CD8-positive, alpha-beta memory T cell (primary cell): ENCODE measurements at regions of chr1 and their contacts with region 1.

Region 1: GRCh38 chr1:67214420-67215174 is 48.3 kb downstream of the IL23R start:
- DNase-seq: peak; percentile 18 to 51 (median 28)
- H3K4me3 ChIP-seq: no peak overlapping the region
- H3K4me3 Mint-ChIP-seq: no peak overlapping the region
- H3K27ac ChIP-seq: no peak overlapping the region
- H3K27ac Mint-ChIP-seq: peak overlapping the region in 1 of 8 donors; percentile 66
- H3K4me1 ChIP-seq: peaks cover 8% of the 10 kb centered on the region
- H3K4me1 Mint-ChIP-seq: peaks cover 8 to 16% (median 12%) of the 10 kb centered on the region in 3 donors
- H3K27me3 ChIP-seq: no peaks in the 10 kb centered on the region
- H3K27me3 Mint-ChIP-seq: no peaks in the 10 kb centered on the region

Region 2: DNA sequence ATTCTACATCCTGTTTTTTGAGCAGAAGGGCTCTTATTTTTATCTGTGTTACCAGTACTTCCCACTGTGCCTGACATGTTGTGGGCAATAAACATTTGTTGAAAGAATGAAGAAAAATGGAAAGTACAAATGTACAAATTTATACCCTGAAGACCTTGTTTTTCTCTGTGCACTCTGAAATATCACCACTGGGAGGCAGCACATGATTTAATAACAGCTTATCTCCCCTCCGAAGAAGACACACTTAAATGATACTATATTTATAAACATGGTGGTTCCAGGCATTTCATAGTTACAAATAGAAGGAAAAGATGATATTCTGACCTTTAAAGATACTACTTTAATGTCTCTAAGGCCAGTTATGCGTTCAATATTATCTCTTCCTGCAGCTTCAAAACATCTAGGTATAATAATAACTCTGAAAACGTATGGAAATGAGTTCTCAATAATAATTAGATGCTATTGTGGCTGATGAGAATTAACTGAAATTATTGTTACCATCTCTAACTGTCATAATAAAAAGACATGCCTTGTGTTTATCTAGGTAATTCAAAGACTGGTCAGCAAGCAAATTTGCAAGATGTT is 449.5 kb before region 1 on chr1:
- CTCF ChIA-PET with region 1: interaction called, 11 read pairs
- POLR2A ChIA-PET with region 1: no interaction called
- DNase-seq: peak; percentile 6 to 52 (median 34)
- H3K4me3 ChIP-seq: no peak overlapping the region
- H3K4me3 Mint-ChIP-seq: no peak overlapping the region
- H3K27ac ChIP-seq: no peak overlapping the region
- H3K27ac Mint-ChIP-seq: no peak overlapping the region
- H3K4me1 ChIP-seq: peaks cover 13% of the 10 kb centered on the region
- H3K4me1 Mint-ChIP-seq: peaks cover 14 to 20% (median 16%) of the 10 kb centered on the region in 3 donors
- H3K27me3 ChIP-seq: no peaks in the 10 kb centered on the region
- H3K27me3 Mint-ChIP-seq: peaks cover 0 to 3% of the 10 kb centered on the region in 2 donors

Region 3: GRCh38 chr1:66996018-66996682 is 218.4 kb before region 1 on chr1:
- CTCF ChIA-PET with region 1: interaction called, 26 read pairs
- POLR2A ChIA-PET with region 1: no interaction called
- DNase-seq: peak; percentile 10 to 67 (median 32)
- H3K4me3 ChIP-seq: no peak overlapping the region
- H3K4me3 Mint-ChIP-seq: no peak overlapping the region
- H3K27ac ChIP-seq: no peak overlapping the region
- H3K27ac Mint-ChIP-seq: no peak overlapping the region
- H3K4me1 ChIP-seq: peaks cover 7% of the 10 kb centered on the region
- H3K4me1 Mint-ChIP-seq: peaks cover 8 to 23% (median 19%) of the 10 kb centered on the region in 3 donors
- H3K27me3 ChIP-seq: no peaks in the 10 kb centered on the region
- H3K27me3 Mint-ChIP-seq: no peaks in the 10 kb centered on the region

Region 4: DNA sequence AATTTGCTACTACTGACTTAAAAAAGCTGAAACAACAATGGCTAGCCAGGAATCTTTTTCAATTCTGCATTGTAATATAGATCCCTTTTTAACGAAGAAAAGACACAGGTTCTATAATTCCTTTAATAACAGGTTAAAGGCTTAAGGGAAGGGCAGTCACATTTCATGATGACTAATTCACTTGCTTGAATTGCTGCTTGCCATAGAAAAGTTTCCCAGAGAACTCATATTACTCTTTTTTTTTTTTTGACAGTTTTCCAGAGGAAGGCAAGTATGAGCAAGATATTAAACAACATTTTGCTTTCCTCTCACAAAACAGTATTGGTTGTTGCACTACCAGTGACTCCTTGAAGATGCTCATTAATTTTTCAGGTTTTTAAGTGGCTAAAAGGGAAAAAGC is 12.6 kb after region 1 on chr1:
- CTCF ChIA-PET with region 1: interaction called, 10 read pairs
- POLR2A ChIA-PET with region 1: no interaction called
- DNase-seq: no peak
- H3K4me3 ChIP-seq: no peak overlapping the region
- H3K4me3 Mint-ChIP-seq: peak overlapping the region in 1 of 7 donors; percentile 28
- H3K27ac ChIP-seq: no peak overlapping the region
- H3K27ac Mint-ChIP-seq: peak overlapping the region in 6 of 8 donors; percentile 11 to 90 (median 78)
- H3K4me1 ChIP-seq: no peaks in the 10 kb centered on the region
- H3K4me1 Mint-ChIP-seq: peaks cover 0 to 20% (median 8%) of the 10 kb centered on the region in 3 donors
- H3K27me3 ChIP-seq: no peaks in the 10 kb centered on the region
- H3K27me3 Mint-ChIP-seq: peaks cover 0 to 21% of the 10 kb centered on the region in 2 donors

Region 5: GRCh38 chr1:67323087-67323486 is 108.5 kb after region 1 on chr1:
- CTCF ChIA-PET with region 1: no interaction called
- POLR2A ChIA-PET with region 1: no interaction called
- DNase-seq: peak in 1 of 5 donors; percentile 6
- H3K4me3 ChIP-seq: no peak overlapping the region
- H3K4me3 Mint-ChIP-seq: peak overlapping the region in 1 of 7 donors; percentile 55
- H3K27ac ChIP-seq: no peak overlapping the region
- H3K27ac Mint-ChIP-seq: peak overlapping the region in 7 of 8 donors; percentile 3 to 74 (median 52)
- H3K4me1 ChIP-seq: no peaks in the 10 kb centered on the region
- H3K4me1 Mint-ChIP-seq: peaks cover 0 to 5% (median 0%) of the 10 kb centered on the region in 3 donors
- H3K27me3 ChIP-seq: no peaks in the 10 kb centered on the region
- H3K27me3 Mint-ChIP-seq: peaks cover 2 to 12% of the 10 kb centered on the region in 2 donors

Region 6: DNA sequence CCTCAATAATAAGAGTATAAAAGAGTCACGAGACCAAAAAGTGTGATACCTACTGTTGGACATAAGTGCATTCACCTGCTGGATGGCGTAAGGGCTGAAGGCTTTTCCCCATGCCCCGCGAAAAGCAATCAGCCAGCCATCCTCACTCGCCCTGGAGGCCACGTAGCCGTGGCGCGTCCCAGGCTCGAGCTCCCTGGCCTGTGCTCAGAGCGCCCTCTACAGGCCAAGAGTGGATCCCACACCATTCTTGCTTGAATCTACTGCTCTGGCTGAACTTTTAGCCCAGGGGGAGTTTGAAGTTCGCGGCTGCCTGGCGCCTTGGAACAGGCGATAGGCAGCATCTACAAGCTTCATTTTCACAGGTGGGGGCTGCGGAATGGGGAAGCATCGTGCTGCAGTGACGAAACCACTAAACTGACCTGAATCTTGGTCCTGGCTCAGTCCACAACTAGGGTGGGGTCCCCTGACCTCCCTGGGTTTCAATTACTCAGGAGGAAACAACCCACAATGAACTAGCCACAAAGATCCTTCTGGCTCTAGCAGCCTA is 285.9 kb after region 1 on chr1:
- CTCF ChIA-PET with region 1: interaction called, 65 read pairs
- POLR2A ChIA-PET with region 1: no interaction called
- DNase-seq: peak; percentile 74 to 87 (median 78)
- H3K4me3 ChIP-seq: no peak overlapping the region
- H3K4me3 Mint-ChIP-seq: peak overlapping the region in 1 of 7 donors; percentile 27
- H3K27ac ChIP-seq: no peak overlapping the region
- H3K27ac Mint-ChIP-seq: peak overlapping the region in 1 of 8 donors; percentile 70
- H3K4me1 ChIP-seq: no peaks in the 10 kb centered on the region
- H3K4me1 Mint-ChIP-seq: peaks cover 4 to 5% (median 5%) of the 10 kb centered on the region in 3 donors
- H3K27me3 ChIP-seq: no peaks in the 10 kb centered on the region
- H3K27me3 Mint-ChIP-seq: peaks cover 9 to 13% of the 10 kb centered on the region in 2 donors